CD8-positive, alpha-beta T cell (primary cell): ENCODE measurements at regions of chr17 and their contacts with region 1.

Region 1: DNA sequence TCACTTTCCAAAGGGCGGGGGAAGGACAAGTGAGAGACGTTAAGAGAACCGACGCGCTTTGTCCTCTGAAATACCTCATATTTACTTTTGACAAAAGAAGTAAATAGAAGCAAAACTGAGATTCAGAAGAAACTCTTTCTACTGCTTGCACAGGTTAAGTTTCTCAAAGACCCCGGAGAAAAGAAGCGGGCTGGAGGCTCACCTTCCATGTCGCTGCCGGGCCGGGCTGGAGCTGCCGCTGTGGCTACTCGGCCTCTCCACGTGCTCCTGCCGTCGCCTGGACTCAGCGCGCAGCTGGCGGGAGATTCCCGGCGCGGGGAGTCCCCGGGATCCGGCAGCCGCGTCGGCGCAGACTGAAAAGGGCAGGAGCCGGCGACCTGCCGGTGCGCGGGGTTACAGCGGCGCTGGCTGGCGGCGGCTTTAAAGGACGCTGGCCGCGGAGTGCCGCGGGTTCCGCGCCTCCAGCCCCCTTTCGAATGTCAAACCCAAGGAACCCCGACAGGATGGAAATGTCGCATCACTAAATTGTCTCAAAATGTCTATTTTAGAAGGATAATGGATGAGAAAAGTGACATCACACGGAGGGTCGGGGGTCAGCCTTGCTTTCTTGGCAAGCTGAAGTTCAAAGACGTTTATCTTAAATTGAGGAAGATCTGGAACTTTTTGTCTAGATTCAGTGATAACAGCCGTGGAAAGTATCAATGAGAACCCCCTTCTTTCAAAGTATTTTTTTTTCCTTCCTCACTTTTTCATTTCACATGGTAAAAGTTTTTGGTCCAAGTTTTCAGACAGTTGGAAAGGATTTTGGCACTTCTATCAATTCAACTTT is at the start of gene IKZF3:
- DNase-seq: peak; percentile 59 to 96 (median 78)
- ATAC-seq: peak; percentile 67
- H3K4me3 ChIP-seq: peak within 1 kb of the TSS; percentile 65 to 74
- H3K4me3 Mint-ChIP-seq: peak within 1 kb of the TSS; percentile 89
- H3K27ac ChIP-seq: peak within 1 kb of the TSS; percentile 92 to 94
- H3K27ac Mint-ChIP-seq: peak within 1 kb of the TSS; percentile 98
- H3K4me1 ChIP-seq: peaks cover 56% of the 10 kb centered on the region
- H3K4me1 Mint-ChIP-seq: peaks cover 61% of the 10 kb centered on the region
- H3K27me3 ChIP-seq: no peaks in the 10 kb centered on the region
- H3K27me3 Mint-ChIP-seq: no peaks in the 10 kb centered on the region
- CTCF ChIP-seq: peak; percentile 49
- total RNA-seq, gene IKZF3: 57.3 to 59.8 TPM

Region 2: GRCh38 chr17:39822051-39822451 is 42.1 kb before region 1 on chr17:
- CTCF ChIA-PET with region 1: interaction called, 7 read pairs
- POLR2A ChIA-PET with region 1: interaction called, 4 read pairs
- intact Hi-C with region 1: loop called in 1 of 2 experiments (anchors 1 kb)
- DNase-seq: peak in 2 of 9 experiments; percentile 39 to 58
- ATAC-seq: no peak
- H3K4me3 ChIP-seq: no peak overlapping the region
- H3K4me3 Mint-ChIP-seq: no peak overlapping the region
- H3K27ac ChIP-seq: peak overlapping the region in 1 of 2 experiments; percentile 88
- H3K27ac Mint-ChIP-seq: peak overlapping the region; percentile 92
- H3K4me1 ChIP-seq: peaks cover 45% of the 10 kb centered on the region
- H3K4me1 Mint-ChIP-seq: peaks cover 50% of the 10 kb centered on the region
- H3K27me3 ChIP-seq: no peaks in the 10 kb centered on the region
- H3K27me3 Mint-ChIP-seq: no peaks in the 10 kb centered on the region
- CTCF ChIP-seq: no peak

Region 3: DNA sequence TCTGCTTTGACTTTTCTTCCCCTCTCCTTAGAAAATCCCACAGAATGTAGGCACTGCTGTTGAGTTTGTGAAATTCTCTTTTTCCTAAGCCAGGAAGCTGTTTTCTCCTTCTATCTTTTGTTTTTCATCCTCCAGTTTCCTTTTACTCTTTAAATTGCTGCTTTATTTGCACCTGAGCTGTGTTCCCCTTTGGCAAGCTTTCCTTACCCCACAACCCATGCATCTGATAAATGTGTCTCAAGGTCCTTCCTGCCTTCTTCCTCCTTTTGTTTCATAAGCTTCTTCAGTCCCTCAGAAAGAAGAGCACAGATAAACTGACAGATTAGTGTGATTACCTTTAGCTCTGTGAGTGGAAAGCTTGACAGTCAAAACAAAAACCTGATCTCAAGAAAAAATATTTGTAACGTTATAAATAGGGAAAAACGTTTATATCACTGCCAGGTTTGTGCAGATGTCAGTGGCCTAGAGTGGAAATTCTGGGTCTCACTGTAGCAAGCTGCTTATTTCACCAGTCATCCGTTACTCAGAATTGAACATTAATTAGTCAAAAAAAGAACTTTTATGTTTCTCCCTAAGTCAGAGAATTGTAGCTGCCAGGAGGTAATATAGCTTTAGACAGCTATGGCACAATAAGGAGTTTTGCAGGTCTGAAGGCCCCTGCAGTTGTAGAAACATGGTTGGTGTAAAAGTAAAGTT is 30.7 kb after region 1 on chr17:
- CTCF ChIA-PET with region 1: no interaction called
- POLR2A ChIA-PET with region 1: no interaction called
- intact Hi-C with region 1: no loop called
- DNase-seq: no peak
- ATAC-seq: no peak
- H3K4me3 ChIP-seq: no peak overlapping the region
- H3K4me3 Mint-ChIP-seq: no peak overlapping the region
- H3K27ac ChIP-seq: no peak overlapping the region
- H3K27ac Mint-ChIP-seq: peak overlapping the region; percentile 16
- H3K4me1 ChIP-seq: no peaks in the 10 kb centered on the region
- H3K4me1 Mint-ChIP-seq: peaks cover 10% of the 10 kb centered on the region
- H3K27me3 ChIP-seq: peaks cover 0 to 2% of the 10 kb centered on the region in 2 experiments
- H3K27me3 Mint-ChIP-seq: no peaks in the 10 kb centered on the region
- CTCF ChIP-seq: no peak